ENCODE measurements at regions of chr2 and their contacts with region 1.

Region 1: DNA sequence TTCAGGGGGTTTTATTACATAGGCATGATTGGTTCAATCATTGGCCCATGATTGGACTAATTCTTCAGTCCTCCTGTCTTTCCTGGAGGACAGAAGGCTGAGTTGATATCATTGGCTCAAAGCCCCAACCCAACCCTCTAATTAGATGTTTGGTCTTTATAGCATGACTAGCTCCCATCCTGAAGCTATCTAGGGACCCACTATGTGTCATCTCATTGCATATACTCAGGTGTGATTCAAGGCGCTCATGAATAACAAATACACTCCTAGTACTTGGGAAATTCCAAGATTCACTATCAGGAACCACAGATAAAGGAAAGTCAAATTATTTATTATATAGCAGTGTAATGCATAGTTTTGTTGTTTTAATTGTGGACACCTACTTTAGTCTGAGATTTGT is 24.9 kb upstream of the NBEAL1 start:
- DNase-seq: no peak
- H3K4me3 Mint-ChIP-seq: no peak overlapping the region
- H3K27ac Mint-ChIP-seq: no peak overlapping the region
- H3K4me1 Mint-ChIP-seq: no peaks in the 10 kb centered on the region
- H3K27me3 Mint-ChIP-seq: no peaks in the 10 kb centered on the region
- CTCF ChIP-seq: no peak

Region 2: DNA sequence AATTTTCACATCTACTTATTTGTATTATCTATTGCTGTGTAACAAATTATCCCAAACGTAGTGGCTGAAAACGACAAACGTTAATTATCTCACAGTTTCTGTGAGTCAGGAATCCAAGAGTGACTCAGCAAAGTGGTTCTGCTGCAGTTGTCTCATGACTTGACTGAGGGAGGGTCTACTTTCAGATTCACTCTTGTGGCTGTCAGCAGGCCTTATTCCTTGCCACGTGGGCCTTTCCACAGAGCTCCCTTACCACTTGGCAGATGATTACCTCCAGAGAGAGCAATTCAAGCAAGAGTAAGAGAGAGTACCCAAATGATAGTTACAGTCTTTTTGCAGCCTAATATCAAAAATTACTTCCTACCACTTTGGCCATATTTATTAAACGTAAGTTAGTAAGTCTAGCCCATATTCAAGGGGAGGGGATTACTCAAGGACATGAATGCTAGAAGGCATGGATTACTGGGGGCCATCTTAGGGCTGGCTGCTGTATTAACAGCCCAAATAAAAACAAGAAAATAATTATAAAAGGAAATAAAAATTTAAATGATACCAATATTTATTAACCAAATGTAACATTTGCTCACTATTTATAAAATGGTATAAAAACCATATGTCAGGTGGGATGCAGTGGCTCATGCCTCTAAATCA is 23.8 kb before region 1 on chr2:
- CTCF ChIA-PET with region 1: no interaction called
- intact Hi-C with region 1: loop called (anchors 1 kb)
- DNase-seq: peak; percentile 13
- H3K4me3 Mint-ChIP-seq: no peak overlapping the region
- H3K27ac Mint-ChIP-seq: no peak overlapping the region
- H3K4me1 Mint-ChIP-seq: peaks cover 19% of the 10 kb centered on the region
- H3K27me3 Mint-ChIP-seq: no peaks in the 10 kb centered on the region
- CTCF ChIP-seq: no peak

Region 3: DNA sequence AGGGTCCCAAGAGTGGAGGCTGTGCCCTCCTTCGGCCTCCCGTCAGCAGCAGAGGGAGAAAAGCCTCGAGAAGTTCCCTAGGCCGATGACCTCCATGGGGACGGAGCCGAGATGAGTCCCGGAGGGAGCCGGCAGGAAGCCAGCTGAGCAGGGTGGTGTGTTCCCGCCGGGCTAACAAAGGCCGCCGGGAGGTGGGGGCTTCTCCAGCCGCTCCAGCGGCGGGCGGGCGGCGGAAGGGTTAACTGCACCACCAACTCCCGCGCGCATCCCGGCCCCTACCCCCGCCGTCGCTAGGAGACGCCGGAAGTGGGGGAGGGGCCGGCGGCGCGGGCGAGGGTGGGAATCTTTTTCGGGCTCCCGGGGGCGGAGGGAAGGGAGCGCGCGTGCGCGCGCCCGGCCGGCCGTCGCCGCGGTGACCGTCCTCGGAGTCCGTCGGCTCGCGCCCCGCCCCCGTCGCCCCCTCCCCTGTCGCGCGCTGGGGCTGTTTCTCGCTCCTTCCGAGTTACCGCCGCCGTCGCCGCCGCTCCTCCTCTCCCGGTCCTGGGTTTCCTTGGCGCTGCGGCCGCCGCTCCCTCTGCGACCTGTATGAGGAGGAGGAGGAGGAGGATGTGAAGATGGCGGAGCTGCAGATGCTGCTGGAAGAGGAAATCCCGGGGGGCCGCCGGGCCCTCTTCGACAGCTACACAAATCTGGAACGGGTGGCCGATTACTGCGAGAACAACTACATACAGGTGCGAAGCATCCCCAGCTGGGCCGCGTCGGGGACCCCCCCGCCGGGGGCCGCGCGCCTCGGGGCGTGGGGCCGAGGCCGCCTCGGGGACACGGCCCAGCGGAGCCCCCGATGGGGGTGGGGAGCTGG is 338.4 kb after region 1 on chr2 and contains the start of gene ABI2:
- CTCF ChIA-PET with region 1: no interaction called
- intact Hi-C with region 1: no loop called
- DNase-seq: peak; percentile 92
- H3K4me3 Mint-ChIP-seq: peak within 1 kb of the TSS; percentile 67
- H3K27ac Mint-ChIP-seq: peak within 1 kb of the TSS; percentile 45
- H3K4me1 Mint-ChIP-seq: peaks cover 31% of the 10 kb centered on the region
- H3K27me3 Mint-ChIP-seq: no peaks in the 10 kb centered on the region
- CTCF ChIP-seq: no peak
- total RNA-seq, gene ABI2: 52.4 and 79.6 TPM in 2 replicates